ENCODE measurements at regions of chr12 and their contacts with region 1.

Region 1: DNA sequence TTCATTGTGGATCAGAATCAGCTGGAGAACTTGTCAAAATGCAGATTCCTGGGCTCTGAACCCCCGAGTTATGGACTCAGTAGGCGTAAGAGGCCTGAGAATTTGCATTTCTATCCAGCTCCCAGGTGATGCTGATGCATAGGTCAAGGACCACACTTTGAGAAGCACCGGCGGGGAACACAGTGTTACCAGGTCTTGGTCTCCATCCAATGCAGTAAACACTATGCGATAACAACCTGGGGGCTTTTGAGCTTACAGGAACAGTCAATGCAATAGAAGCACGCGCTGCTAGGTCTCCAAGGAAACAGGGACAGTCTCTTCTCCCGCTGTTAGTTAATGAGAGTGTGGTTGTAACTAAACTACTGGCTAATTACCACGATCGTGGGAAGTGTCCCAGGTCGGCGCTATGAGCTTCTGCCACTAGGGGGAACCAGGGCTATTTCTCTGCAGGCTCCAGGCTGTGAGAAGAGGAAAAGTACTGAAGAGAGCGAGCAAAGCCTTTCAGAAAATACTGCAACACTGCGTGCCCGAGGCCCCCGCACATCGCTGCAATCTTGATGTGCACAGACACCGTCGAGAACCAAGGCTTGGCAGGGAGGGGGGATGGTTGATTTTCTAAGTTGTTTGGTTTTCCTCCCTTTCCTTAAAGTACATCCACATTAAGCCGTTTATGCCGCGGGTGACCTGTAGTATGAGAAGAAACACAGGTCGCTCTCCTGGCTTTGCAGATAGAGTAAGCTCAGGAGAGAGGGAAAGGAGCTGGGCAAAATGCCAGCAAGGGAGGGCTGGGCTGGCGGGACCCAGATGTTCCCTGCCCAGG is 52.0 kb upstream of the KCNA1 start:
- DNase-seq: no peak
- ATAC-seq: peak; percentile 82

Region 2: GRCh38 chr12:4918950-4919660 is 61.4 kb after region 1 on chr12:
- intact Hi-C with region 1: no loop called
- DNase-seq: no peak
- ATAC-seq: no peak

Region 3: DNA sequence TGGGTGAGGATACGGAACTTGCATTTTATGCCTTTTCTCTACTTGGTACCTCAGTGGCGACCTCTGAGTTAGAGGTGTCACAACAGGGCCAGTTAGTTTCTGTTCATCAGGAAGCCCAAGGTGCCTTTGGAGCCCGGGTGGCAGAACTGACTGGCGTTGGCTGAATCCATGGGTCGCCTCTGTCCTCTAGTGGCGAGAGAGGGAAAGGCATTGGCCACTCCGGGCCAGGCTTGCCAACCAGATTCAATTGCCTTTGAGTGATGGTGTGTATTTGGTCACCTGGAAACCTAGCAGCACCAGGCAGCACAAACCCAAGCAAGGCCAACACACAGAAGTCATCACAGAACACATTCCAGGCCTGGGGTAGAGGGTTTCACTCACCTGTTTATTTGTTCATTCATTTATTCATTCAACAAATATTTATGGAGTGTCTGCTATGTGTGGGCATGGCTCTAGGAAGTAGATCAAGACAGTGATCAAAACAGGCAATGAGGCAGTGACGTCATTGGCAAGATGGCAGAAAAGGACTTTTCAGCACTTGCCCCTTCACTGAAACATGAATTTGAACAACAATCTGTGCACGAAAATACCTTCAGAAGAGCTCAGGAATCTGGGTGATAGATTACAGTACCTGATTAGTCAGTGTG is 145.5 kb after region 1 on chr12:
- intact Hi-C with region 1: loop called (anchors 1 kb)
- DNase-seq: peak; percentile 85
- ATAC-seq: peak; percentile 86

Region 4: GRCh38 chr12:5083955-5084849 is 226.5 kb after region 1 on chr12:
- intact Hi-C with region 1: loop called (anchors 5 kb)
- DNase-seq: no peak
- ATAC-seq: no peak